Activated CD4-positive, alpha-beta T cell treated with anti-CD3 and anti-CD28 coated beads for 36 hours (primary cell): ENCODE measurements at regions of chr3 and their contacts with region 1.

Region 1: GRCh38 chr3:56783644-56784447 is 17.9 kb downstream of the ARHGEF3 start:
- DNase-seq: peak; percentile 81
- ATAC-seq: peak; percentile 77
- H3K4me3 Mint-ChIP-seq: peak overlapping the region; percentile 65
- H3K27ac Mint-ChIP-seq: peak overlapping the region; percentile 97
- H3K4me1 Mint-ChIP-seq: peaks cover 98% of the 10 kb centered on the region
- H3K27me3 Mint-ChIP-seq: no peaks in the 10 kb centered on the region

Region 2: GRCh38 chr3:56556908-56557830 is 226.7 kb before region 1 on chr3 and contains the start of gene CCDC66:
- CTCF ChIA-PET with region 1: no interaction called
- POLR2A ChIA-PET with region 1: no interaction called
- intact Hi-C with region 1: loop called (anchors 5 to 10 kb)
- DNase-seq: peak; percentile 97
- ATAC-seq: peak; percentile 97
- H3K4me3 Mint-ChIP-seq: peak within 1 kb of the TSS; percentile 93
- H3K27ac Mint-ChIP-seq: peak within 1 kb of the TSS; percentile 99
- H3K4me1 Mint-ChIP-seq: peaks cover 20% of the 10 kb centered on the region
- H3K27me3 Mint-ChIP-seq: no peaks in the 10 kb centered on the region
- total RNA-seq, gene CCDC66: 23.5 to 28.5 TPM

Region 3: DNA sequence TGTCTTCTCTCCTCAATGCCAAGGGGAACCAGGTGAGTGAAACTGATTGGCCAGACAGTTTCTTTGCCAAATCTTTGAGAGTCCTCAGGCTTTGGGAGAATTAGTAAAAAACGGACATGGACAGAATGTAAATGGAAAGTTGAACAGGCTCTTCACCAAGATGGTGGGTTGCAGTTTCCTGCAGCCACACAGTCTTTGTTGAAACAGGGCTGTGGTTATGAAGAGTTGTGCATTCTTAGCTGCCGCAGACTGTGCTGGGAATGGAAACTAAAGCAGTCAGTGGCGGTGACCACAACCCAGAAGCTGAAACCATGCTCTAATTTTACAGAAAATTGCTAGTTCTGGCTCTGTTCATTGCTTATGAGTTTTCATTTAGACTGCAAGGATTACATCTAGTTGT is 58.7 kb before region 1 on chr3:
- CTCF ChIA-PET with region 1: no interaction called
- POLR2A ChIA-PET with region 1: interaction called, 7 read pairs
- intact Hi-C with region 1: loop called (anchors 1 to 2 kb)
- DNase-seq: peak; percentile 82
- ATAC-seq: peak; percentile 94
- H3K4me3 Mint-ChIP-seq: peak overlapping the region; percentile 24
- H3K27ac Mint-ChIP-seq: peak overlapping the region; percentile 88
- H3K4me1 Mint-ChIP-seq: peaks cover 30% of the 10 kb centered on the region
- H3K27me3 Mint-ChIP-seq: no peaks in the 10 kb centered on the region

Region 4: DNA sequence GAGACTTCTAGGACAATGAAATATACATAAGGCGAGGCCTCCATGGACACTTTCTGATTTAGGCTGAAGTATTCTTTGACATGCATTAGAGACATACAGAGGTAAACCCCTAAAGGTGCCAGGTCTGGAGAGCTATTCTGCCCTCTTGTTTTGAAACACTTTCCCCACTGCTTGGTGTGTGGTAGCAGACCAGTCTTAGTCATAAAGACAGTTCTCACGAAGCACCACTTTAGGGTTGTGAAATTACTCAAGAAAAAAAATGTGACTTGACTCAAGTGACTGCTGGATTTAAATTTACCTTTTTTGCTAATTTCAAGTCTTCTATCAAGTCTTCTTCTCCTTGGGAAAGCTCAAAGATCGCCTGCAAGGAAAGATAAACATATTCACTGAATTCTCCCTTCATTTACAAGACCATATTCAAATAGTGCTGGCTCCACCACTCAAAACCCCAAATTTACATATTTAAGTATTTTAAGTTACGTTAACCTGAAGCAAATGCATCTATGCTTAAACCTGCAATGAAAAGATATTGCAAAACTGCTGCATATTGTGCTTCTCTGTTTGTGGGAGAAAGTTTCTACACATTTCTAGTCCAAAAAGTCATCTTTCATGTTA is 30.5 kb before region 1 on chr3:
- CTCF ChIA-PET with region 1: interaction called, 7 read pairs
- POLR2A ChIA-PET with region 1: no interaction called
- intact Hi-C with region 1: loop called (anchors 1 to 2 kb)
- DNase-seq: peak; percentile 66
- ATAC-seq: peak; percentile 98
- H3K4me3 Mint-ChIP-seq: peak overlapping the region; percentile 21
- H3K27ac Mint-ChIP-seq: peak overlapping the region; percentile 70
- H3K4me1 Mint-ChIP-seq: peaks cover 59% of the 10 kb centered on the region
- H3K27me3 Mint-ChIP-seq: no peaks in the 10 kb centered on the region

Region 5: GRCh38 chr3:56758539-56758981 is 25.3 kb before region 1 on chr3:
- CTCF ChIA-PET with region 1: interaction called, 7 read pairs
- POLR2A ChIA-PET with region 1: no interaction called
- intact Hi-C with region 1: loop called (anchors 1 to 2 kb)
- DNase-seq: peak; percentile 66
- ATAC-seq: peak; percentile 83
- H3K4me3 Mint-ChIP-seq: peak overlapping the region; percentile 63
- H3K27ac Mint-ChIP-seq: peak overlapping the region; percentile 83
- H3K4me1 Mint-ChIP-seq: peaks cover 82% of the 10 kb centered on the region
- H3K27me3 Mint-ChIP-seq: no peaks in the 10 kb centered on the region

Region 6: DNA sequence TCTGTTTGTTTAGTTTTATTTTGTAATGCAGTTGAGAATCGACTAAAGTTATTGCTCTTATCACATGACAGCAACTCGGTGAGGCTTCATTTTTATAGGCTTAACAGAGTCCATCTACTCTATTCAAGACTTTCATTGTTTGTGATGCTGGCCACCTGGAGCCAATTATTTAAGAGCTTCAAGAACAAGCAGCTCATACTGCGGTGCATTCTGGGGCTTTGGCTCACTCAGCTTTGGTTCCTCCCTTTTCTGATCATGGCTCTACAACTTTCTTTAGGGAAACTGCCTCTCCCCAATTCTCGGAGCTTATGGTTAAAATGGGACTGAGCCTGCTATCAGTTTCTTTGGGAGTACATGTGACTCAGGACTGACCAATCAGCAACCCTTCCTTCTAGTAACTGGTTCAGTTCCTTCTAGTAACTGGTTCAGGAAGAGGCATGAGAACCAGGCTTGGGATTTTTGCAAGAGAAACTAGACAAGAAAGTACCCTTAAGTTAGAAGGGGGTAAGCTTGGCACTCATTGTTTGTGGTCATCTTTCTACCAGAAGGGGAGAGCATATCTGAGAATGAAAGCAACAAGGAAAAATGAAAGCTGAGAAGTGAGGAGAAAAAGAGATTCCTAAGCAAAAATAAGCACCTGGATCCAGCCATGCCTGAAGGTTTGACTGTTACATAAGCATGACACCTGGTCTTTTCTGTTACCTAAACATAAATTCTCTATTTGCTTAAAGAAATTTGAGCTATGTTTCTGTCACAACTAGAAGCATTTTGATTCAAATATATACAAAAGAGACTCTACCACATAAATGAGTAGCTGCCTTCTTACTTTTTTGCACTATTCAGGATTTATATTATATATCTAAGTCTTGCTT is 42.0 kb after region 1 on chr3:
- CTCF ChIA-PET with region 1: no interaction called
- POLR2A ChIA-PET with region 1: no interaction called
- intact Hi-C with region 1: no loop called
- DNase-seq: no peak
- ATAC-seq: no peak
- H3K4me3 Mint-ChIP-seq: no peak overlapping the region
- H3K27ac Mint-ChIP-seq: no peak overlapping the region
- H3K4me1 Mint-ChIP-seq: peaks cover 40% of the 10 kb centered on the region
- H3K27me3 Mint-ChIP-seq: no peaks in the 10 kb centered on the region